ENCODE measurements at regions of chr7 and their contacts with region 1.

Region 1: DNA sequence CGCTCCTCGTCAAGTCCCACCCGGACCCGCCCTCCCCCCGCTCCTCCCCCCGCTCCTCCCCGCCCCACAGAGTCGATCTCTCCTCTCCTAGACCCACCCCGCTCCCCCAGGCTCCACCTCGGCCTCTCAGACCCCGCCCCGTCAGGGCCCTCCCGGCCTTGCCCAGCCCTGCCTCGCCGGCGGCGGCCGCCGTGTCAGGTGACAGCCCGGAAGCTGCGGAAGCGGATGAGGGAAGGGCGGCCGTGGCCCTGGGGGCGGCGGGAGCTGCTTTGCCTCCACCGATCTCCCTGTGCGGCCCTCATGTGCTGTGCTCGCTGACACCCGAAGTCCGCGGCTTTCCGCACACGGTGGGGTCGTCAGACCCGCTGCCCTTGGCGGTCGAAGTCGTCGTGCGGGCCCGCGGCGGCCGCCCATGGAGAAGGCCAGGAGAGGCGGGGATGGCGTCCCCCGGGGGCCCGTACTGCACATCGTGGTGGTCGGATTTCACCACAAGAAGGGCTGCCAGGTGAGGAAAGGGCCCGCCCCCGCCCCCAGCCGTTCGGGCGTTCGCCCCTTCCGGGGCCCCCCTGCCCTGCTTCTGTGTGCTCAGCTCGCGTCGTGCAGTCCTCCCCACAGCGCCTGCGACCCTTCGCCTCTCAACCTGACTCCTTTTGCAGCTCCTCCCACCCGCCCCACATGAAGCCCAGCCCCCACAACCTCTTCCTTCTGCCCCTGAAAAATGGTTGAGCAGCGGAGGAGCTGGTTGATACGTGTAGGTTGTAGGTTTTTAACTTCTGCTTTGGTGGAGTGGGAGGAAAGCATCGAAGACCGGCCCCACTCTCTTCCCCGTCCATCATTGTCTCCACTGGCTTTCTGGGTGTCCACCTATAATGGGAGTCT is at the start of gene AVL9:
- DNase-seq: peak; percentile 99
- ATAC-seq: peak; percentile 97
- total RNA-seq, gene AVL9: 13.8 TPM

Region 2: GRCh38 chr7:32588657-32589056 is 93.1 kb after region 1 on chr7:
- intact Hi-C with region 1: loop called (anchors 10 kb)
- DNase-seq: no peak
- ATAC-seq: peak; percentile 55

Measured in Right ventricle myocardium superior (tissue), 1 donor.